ENCODE measurements at regions of chr6 and their contacts with region 1.

Region 1: GRCh38 chr6:159691133-159691962 is 1.7 kb downstream of the SOD2 start:
- DNase-seq: peak; percentile 78
- ATAC-seq: no peak
- H3K4me3 ChIP-seq: peak overlapping the region; percentile 89
- H3K27ac ChIP-seq: no peak overlapping the region
- H3K4me1 ChIP-seq: peaks cover 19% of the 10 kb centered on the region
- H3K27me3 ChIP-seq: no peaks in the 10 kb centered on the region
- CTCF ChIP-seq: peak; percentile 77

Region 2: GRCh38 chr6:159540152-159540551 is 151.2 kb before region 1 on chr6:
- CTCF ChIA-PET with region 1: no interaction called
- POLR2A ChIA-PET with region 1: no interaction called
- intact Hi-C with region 1: no loop called
- DNase-seq: no peak
- ATAC-seq: no peak
- H3K4me3 ChIP-seq: no peak overlapping the region
- H3K27ac ChIP-seq: no peak overlapping the region
- H3K4me1 ChIP-seq: no peaks in the 10 kb centered on the region
- H3K27me3 ChIP-seq: peaks cover 45% of the 10 kb centered on the region
- CTCF ChIP-seq: peak; percentile 40; the same call in 1 of the 2 replicates

Region 3: GRCh38 chr6:159726918-159727716 is 35.8 kb after region 1 on chr6 and contains the start of gene WTAP:
- CTCF ChIA-PET with region 1: no interaction called
- POLR2A ChIA-PET with region 1: interaction called, 11 read pairs
- intact Hi-C with region 1: loop called (anchors 1 kb)
- DNase-seq: peak; percentile 87
- ATAC-seq: peak; percentile 81
- H3K4me3 ChIP-seq: peak within 1 kb of the TSS; percentile 99
- H3K27ac ChIP-seq: peak within 1 kb of the TSS; percentile 96
- H3K4me1 ChIP-seq: peaks cover 16% of the 10 kb centered on the region
- H3K27me3 ChIP-seq: no peaks in the 10 kb centered on the region
- CTCF ChIP-seq: no peak
- total RNA-seq, gene WTAP: 50.8 and 54.5 TPM in 2 replicates

Region 4: GRCh38 chr6:159761873-159762680 is 70.7 kb after region 1 on chr6 and contains the start of gene ACAT2:
- CTCF ChIA-PET with region 1: no interaction called
- POLR2A ChIA-PET with region 1: no interaction called
- intact Hi-C with region 1: loop called (anchors 2 kb)
- DNase-seq: peak; percentile 92
- ATAC-seq: peak; percentile 92
- H3K4me3 ChIP-seq: peak within 1 kb of the TSS; percentile 87
- H3K27ac ChIP-seq: peak within 1 kb of the TSS; percentile 95
- H3K4me1 ChIP-seq: peaks cover 21% of the 10 kb centered on the region
- H3K27me3 ChIP-seq: no peaks in the 10 kb centered on the region
- CTCF ChIP-seq: no peak
- total RNA-seq, gene ACAT2: 29.0 and 36.0 TPM in 2 replicates

Region 5: GRCh38 chr6:159789377-159790148 is 98.2 kb after region 1 on chr6 and contains the start of gene TCP1:
- CTCF ChIA-PET with region 1: interaction called, 4 read pairs
- POLR2A ChIA-PET with region 1: no interaction called
- intact Hi-C with region 1: loop called (anchors 2 kb)
- DNase-seq: peak; percentile 98
- ATAC-seq: peak; percentile 85
- H3K4me3 ChIP-seq: peak within 1 kb of the TSS; percentile 98
- H3K27ac ChIP-seq: peak within 1 kb of the TSS; percentile 82
- H3K4me1 ChIP-seq: peaks cover 30% of the 10 kb centered on the region; the same call in 1 of the 2 replicates
- H3K27me3 ChIP-seq: no peaks in the 10 kb centered on the region
- CTCF ChIP-seq: no peak
- total RNA-seq, gene TCP1: 253 and 280 TPM in 2 replicates

Region 6: DNA sequence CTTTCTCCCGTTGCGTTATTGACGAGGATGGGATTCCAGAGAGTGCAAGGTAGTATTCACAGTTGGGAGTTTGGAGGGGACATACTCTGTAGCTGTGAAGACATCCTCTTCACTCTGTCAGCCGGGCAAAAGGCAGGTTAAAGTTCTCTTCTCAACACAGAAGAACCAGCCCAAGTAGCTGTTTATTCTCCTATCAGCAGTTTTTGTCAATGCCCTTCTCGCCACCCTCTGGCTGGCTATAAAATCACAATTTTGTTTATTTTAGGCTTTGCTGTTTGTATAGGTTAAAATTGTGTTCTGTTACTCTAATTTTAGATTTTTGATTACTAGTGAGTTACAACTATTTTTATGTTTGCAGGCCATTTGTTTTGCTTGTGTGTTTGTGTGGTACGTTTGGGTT is 161.5 kb after region 1 on chr6:
- CTCF ChIA-PET with region 1: interaction called, 3 read pairs
- POLR2A ChIA-PET with region 1: no interaction called
- intact Hi-C with region 1: loop called (anchors 1 kb)
- DNase-seq: peak; percentile 31
- ATAC-seq: peak; percentile 71
- H3K4me3 ChIP-seq: no peak overlapping the region
- H3K27ac ChIP-seq: no peak overlapping the region
- H3K4me1 ChIP-seq: no peaks in the 10 kb centered on the region
- H3K27me3 ChIP-seq: no peaks in the 10 kb centered on the region
- CTCF ChIP-seq: peak; percentile 50; the same call in 1 of the 2 replicates